ENCODE measurements at regions of chr19 and their contacts with region 1.

Region 1: GRCh38 chr19:32224371-32225244 is 120.8 kb upstream of the ZNF507 start:
- DNase-seq: peak; percentile 48 to 75 (median 61)
- ATAC-seq: peak in 3 of 4 donors; percentile 83 to 93 (median 93)
- H3K4me3 ChIP-seq: peak overlapping the region in 10 of 12 donors; percentile 16 to 51 (median 36)
- H3K27ac ChIP-seq: no peak overlapping the region
- H3K4me1 ChIP-seq: peaks cover 0 to 9% (median 4%) of the 10 kb centered on the region in 12 donors
- H3K27me3 ChIP-seq: peaks cover 0 to 65% (median 16%) of the 10 kb centered on the region in 9 donors
- CTCF ChIP-seq: peak; percentile 98 to 100 (median 100)
- POLR2A ChIP-seq: no peak

Region 2: GRCh38 chr19:30682999-30683536 is 1541.5 kb before region 1 on chr19:
- intact Hi-C with region 1: loop called (anchors 1 to 5 kb)
- DNase-seq: peak; percentile 63 to 80 (median 71)
- ATAC-seq: peak in 3 of 4 donors; percentile 68 to 88 (median 82)
- H3K4me3 ChIP-seq: no peak overlapping the region
- H3K27ac ChIP-seq: no peak overlapping the region
- H3K4me1 ChIP-seq: peaks cover 0 to 4% (median 0%) of the 10 kb centered on the region in 12 donors
- H3K27me3 ChIP-seq: peaks cover 0 to 32% (median 10%) of the 10 kb centered on the region in 9 donors
- CTCF ChIP-seq: peak; percentile 85 to 96 (median 90)
- POLR2A ChIP-seq: no peak

Region 3: DNA sequence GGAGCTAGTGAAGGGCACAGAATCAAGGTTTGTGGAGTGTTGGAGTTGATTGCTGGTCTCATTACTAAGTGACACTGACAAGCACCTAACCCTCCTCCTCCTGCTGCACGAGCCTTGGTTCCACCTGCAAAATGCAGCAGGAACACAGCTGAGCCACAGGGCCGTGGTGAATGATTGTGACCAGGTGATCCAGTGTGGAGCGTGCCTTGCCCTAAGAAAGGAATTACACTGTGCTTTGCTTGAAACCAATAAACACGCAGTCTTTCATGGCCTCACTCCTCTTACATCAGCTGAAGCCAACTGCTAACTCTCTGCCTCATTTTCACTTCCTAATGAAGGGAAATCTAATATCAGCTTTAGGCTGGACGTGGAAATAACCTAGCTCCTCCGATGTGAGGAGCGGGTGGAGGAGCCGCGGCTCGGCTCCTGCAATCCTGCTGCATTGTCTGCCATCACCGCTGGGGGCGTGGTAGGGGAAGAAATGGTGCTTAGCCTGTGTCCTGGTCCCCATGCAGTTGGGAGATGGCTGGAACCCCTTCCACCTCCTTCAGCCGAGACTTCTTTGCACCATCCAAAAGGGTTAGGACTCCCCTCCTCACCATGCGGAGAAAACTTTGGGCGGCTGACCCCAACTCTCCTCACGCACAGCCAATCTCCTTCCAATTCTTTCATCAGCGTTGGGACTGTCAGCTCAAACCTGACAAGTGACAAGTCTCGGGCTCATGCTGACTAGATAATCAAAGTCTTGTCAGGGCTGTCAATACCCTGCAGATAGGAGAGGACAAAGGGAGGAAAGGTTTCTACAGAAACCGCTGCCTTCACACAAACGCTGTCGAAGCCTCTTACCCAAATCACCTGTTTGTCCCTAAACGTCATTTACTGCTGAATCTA is 1424.5 kb before region 1 on chr19:
- intact Hi-C with region 1: loop called in 1 of 10 experiments (anchors 10 kb)
- DNase-seq: peak; percentile 33 to 79 (median 54)
- ATAC-seq: peak in 3 of 4 donors; percentile 60 to 76 (median 74)
- H3K4me3 ChIP-seq: no peak overlapping the region
- H3K27ac ChIP-seq: no peak overlapping the region
- H3K4me1 ChIP-seq: no peaks in the 10 kb centered on the region
- H3K27me3 ChIP-seq: peaks cover 0 to 59% (median 15%) of the 10 kb centered on the region in 9 donors
- CTCF ChIP-seq: peak; percentile 59 to 81 (median 72)
- POLR2A ChIP-seq: no peak

Region 4: DNA sequence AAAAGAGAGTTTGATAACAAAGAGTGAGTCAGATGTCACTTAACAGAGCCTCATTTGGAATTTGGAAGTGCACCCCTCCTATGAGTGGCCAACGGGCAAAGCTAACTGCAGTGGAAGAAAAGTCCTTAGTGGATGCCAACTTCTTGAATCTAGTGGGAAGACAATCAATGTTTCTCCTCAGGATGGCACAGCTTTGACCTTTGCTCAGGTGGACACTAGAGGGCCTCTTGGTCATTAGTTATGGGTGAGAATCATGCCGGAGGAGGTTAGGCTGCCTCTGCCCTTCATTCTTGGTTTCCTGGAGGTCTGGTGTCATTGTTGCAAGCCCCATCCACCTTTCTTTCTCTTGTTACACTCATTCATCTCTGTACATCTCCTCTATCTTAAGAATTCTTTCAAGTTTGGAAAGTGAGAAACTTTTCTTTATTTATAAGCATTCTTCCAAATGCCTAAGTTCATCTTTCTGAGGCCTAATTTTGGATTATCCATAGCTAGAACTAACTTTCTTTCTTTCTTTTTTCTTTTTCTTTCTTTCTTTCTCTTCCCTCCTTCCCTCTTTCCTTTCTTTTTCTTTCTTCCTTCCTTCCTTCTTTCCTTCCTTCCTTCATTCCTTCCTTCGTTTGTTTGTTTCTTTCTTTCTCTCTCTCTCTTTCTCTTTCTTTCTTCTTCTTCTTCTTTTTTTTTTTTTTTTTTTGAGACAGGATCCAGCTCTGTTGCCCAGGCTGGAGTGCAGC is 548.2 kb before region 1 on chr19:
- intact Hi-C with region 1: loop called in 4 of 10 experiments (anchors 10 kb)
- DNase-seq: no peak
- ATAC-seq: peak in 1 of 4 donors; percentile 29
- H3K4me3 ChIP-seq: no peak overlapping the region
- H3K27ac ChIP-seq: no peak overlapping the region
- H3K4me1 ChIP-seq: no peaks in the 10 kb centered on the region
- H3K27me3 ChIP-seq: no peaks in the 10 kb centered on the region
- CTCF ChIP-seq: peak in 7 of 12 donors; percentile 16 to 39 (median 31)
- POLR2A ChIP-seq: no peak

Measured in heart left ventricle (tissue), 16 donors.